Head of caudate nucleus (tissue), 42 donors: ENCODE measurements at regions of chr7 and their contacts with region 1.

Region 1: GRCh38 chr7:39948956-39949928 is 814 bp upstream of the CDK13 start:
- DNase-seq: peak; percentile 96 to 100 (median 99)

Region 2: GRCh38 chr7:39566023-39566921 is 383.0 kb before region 1 on chr7 and contains the start of gene YAE1:
- intact Hi-C with region 1: no loop called
- DNase-seq: peak; percentile 77 to 94 (median 90)

Region 3: DNA sequence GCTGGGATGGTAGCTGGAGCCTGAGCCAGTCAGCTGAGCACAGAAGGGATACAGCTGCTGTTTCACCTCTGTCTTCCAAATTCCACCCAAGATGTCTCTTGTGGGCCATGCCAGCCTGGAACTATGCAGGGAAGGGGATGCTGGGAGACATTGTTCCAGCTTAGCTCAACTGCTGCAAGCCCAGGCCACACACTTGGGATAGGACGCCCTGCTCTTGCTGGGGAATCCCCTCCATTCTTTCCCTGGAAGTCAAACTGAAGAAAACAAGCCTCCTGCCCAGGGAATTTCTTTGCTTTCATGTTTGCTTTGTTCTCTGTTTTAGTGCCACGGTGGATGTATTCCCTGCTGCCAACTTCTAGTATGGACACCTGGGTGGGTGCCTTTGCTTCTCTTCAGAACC is 54.3 kb before region 1 on chr7:
- intact Hi-C with region 1: loop called (anchors 5 kb)
- DNase-seq: no peak

Region 4: GRCh38 chr7:40057292-40057691 is 108.0 kb after region 1 on chr7:
- intact Hi-C with region 1: loop called (anchors 5 kb)
- DNase-seq: no peak

Region 5: GRCh38 chr7:40134428-40135316 is 185.4 kb after region 1 on chr7 and contains the starts of genes MPLKIP and SUGCT:
- intact Hi-C with region 1: loop called (anchors 2 kb)
- DNase-seq: peak; percentile 71 to 94 (median 86)